ENCODE measurements at regions of chr12 and their contacts with region 1.

Region 1: GRCh38 chr12:52278541-52279421 is 4.3 kb downstream of the KRT86 start:
- DNase-seq: peak; percentile 35 to 85 (median 62)
- ATAC-seq: peak; percentile 90
- H3K4me3 ChIP-seq: no peak overlapping the region
- H3K4me3 Mint-ChIP-seq: peak overlapping the region in 6 of 10 donors; percentile 1 to 56 (median 25)
- H3K27ac ChIP-seq: no peak overlapping the region
- H3K27ac Mint-ChIP-seq: peak overlapping the region in 1 of 9 donors; percentile 30
- H3K4me1 ChIP-seq: no peaks in the 10 kb centered on the region
- H3K4me1 Mint-ChIP-seq: peaks cover 0 to 15% (median 5%) of the 10 kb centered on the region in 7 donors
- H3K27me3 ChIP-seq: peaks cover 0 to 5% of the 10 kb centered on the region in 2 donors
- H3K27me3 Mint-ChIP-seq: peaks cover 16 to 57% (median 32%) of the 10 kb centered on the region in 5 donors

Region 2: DNA sequence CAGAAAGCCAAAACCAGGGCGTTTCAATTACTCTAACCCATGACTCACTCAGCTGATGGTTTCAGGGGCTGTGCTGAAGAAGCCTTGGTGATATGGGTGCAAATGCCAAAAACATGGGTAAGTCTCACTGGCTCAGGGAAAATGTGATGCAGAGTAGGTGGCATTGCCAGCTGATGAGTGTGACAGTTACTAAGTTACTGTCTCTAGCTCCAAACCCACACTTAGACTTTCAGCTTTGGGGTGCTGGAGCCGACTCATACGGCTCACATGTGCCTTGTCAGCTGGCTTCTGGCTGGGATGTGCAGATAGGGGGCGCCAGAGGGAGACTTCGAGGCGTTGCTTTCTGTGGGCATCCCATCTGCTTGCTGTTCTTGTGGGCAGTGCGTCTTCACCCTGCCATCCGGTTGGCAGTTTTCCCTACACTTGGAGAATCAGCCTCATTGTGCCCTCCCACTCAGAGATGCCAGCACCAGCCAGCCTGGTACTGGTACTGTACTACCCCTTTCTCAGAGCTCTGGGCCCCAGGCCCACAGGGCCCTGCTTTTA is 56.8 kb before region 1 on chr12:
- CTCF ChIA-PET with region 1: no interaction called
- POLR2A ChIA-PET with region 1: no interaction called
- intact Hi-C with region 1: loop called in 1 of 2 experiments (anchors 2 kb)
- DNase-seq: peak in 1 of 9 donors; percentile 75
- ATAC-seq: peak; percentile 73
- H3K4me3 ChIP-seq: no peak overlapping the region
- H3K4me3 Mint-ChIP-seq: no peak overlapping the region
- H3K27ac ChIP-seq: no peak overlapping the region
- H3K27ac Mint-ChIP-seq: no peak overlapping the region
- H3K4me1 ChIP-seq: no peaks in the 10 kb centered on the region
- H3K4me1 Mint-ChIP-seq: peaks cover 0 to 9% (median 0%) of the 10 kb centered on the region in 7 donors
- H3K27me3 ChIP-seq: peaks cover 0 to 5% of the 10 kb centered on the region in 2 donors
- H3K27me3 Mint-ChIP-seq: peaks cover 32 to 56% (median 40%) of the 10 kb centered on the region in 5 donors

Region 3: GRCh38 chr12:52300796-52301691 is 22.3 kb after region 1 on chr12:
- CTCF ChIA-PET with region 1: no interaction called
- POLR2A ChIA-PET with region 1: no interaction called
- intact Hi-C with region 1: no loop called
- DNase-seq: peak in 1 of 9 donors; percentile 3
- ATAC-seq: no peak
- H3K4me3 ChIP-seq: no peak overlapping the region
- H3K4me3 Mint-ChIP-seq: no peak overlapping the region
- H3K27ac ChIP-seq: no peak overlapping the region
- H3K27ac Mint-ChIP-seq: no peak overlapping the region
- H3K4me1 ChIP-seq: no peaks in the 10 kb centered on the region
- H3K4me1 Mint-ChIP-seq: peaks cover 0 to 18% (median 12%) of the 10 kb centered on the region in 7 donors
- H3K27me3 ChIP-seq: no peaks in the 10 kb centered on the region
- H3K27me3 Mint-ChIP-seq: peaks cover 7 to 33% (median 9%) of the 10 kb centered on the region in 5 donors

Measured in naive thymus-derived CD4-positive, alpha-beta T cell (primary cell).